Panc1 (cell line): ENCODE measurements at regions of chr9 and their contacts with region 1.

Region 1: GRCh38 chr9:127264462-127265219 is at the start of gene GARNL3:
- DNase-seq: no peak
- ATAC-seq: no peak
- H3K4me3 ChIP-seq: no peak within 1 kb of the TSS
- H3K27ac ChIP-seq: no peak within 1 kb of the TSS
- H3K4me1 ChIP-seq: no peaks in the 10 kb centered on the region
- H3K27me3 ChIP-seq: no peaks in the 10 kb centered on the region
- CTCF ChIP-seq: no peak
- total RNA-seq, gene GARNL3: 11.5 TPM

Region 2: GRCh38 chr9:127388037-127388855 is 123.6 kb after region 1 on chr9:
- CTCF ChIA-PET with region 1: interaction called, 12 read pairs
- POLR2A ChIA-PET with region 1: no interaction called
- in situ Hi-C with region 1: no loop called
- intact Hi-C with region 1: no loop called
- DNase-seq: peak; percentile 53
- ATAC-seq: peak; percentile 95
- H3K4me3 ChIP-seq: no peak overlapping the region
- H3K27ac ChIP-seq: peak overlapping the region; percentile 93
- H3K4me1 ChIP-seq: peaks cover 36% of the 10 kb centered on the region
- H3K27me3 ChIP-seq: no peaks in the 10 kb centered on the region
- CTCF ChIP-seq: no peak